Prostate gland (tissue), 2 donors: ENCODE measurements at regions of chr9 and their contacts with region 1.

Region 1: GRCh38 chr9:87973730-87974292 is 522 bp downstream of the CDK20 start:
- DNase-seq: no peak
- H3K4me3 ChIP-seq: peak overlapping the region; percentile 58 to 68
- H3K27ac ChIP-seq: peak overlapping the region; percentile 77 to 85
- H3K4me1 ChIP-seq: peaks cover 4% of the 10 kb centered on the region
- H3K27me3 ChIP-seq: no peaks in the 10 kb centered on the region
- CTCF ChIP-seq: no peak
- POLR2A ChIP-seq: no peak

Region 2: DNA sequence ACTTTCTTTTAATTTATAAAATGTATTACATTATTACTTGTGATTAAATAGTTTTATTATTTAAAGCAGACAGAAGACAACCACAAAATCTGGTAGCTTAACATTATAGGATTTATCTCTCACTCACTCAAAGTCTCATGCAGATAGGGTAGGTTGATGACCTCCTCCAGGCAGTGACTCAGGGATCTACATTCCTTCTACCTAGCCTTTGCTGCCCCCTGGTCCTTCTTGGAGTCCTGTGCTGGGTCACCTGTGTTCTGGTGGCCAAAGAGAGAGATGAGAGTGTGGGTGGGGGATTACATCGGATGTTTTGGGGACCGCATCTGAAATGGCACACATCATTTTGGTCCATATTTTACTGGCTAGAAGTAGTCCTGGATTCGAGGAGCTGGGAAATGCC is 343.5 kb before region 1 on chr9:
- intact Hi-C with region 1: no loop called
- DNase-seq: no peak
- H3K4me3 ChIP-seq: no peak overlapping the region
- H3K27ac ChIP-seq: no peak overlapping the region
- H3K4me1 ChIP-seq: no peaks in the 10 kb centered on the region
- H3K27me3 ChIP-seq: no peaks in the 10 kb centered on the region
- CTCF ChIP-seq: no peak
- POLR2A ChIP-seq: no peak

Region 3: GRCh38 chr9:87725900-87726709 is 247.7 kb before region 1 on chr9 and contains the start of gene CTSL:
- intact Hi-C with region 1: loop called (anchors 5 kb)
- DNase-seq: peak; percentile 86
- H3K4me3 ChIP-seq: peak within 1 kb of the TSS; percentile 57 to 62
- H3K27ac ChIP-seq: peak within 1 kb of the TSS; percentile 90 to 94
- H3K4me1 ChIP-seq: peaks cover 4% of the 10 kb centered on the region
- H3K27me3 ChIP-seq: no peaks in the 10 kb centered on the region
- CTCF ChIP-seq: peak in 3 of 4 experiments; percentile 27 to 48 (median 46)
- POLR2A ChIP-seq: peak; percentile 75
- total RNA-seq, gene CTSL: 87.3 to 90.1 TPM